ENCODE measurements at regions of chr5 and their contacts with region 1.

Region 1: GRCh38 chr5:88732181-88732633 is 150.8 kb downstream of the MEF2C start:
- DNase-seq: no peak
- H3K4me3 ChIP-seq: no peak overlapping the region
- H3K27ac ChIP-seq: peak overlapping the region; percentile 2 to 60 (median 44)
- H3K4me1 ChIP-seq: peaks cover 0 to 4% (median 0%) of the 10 kb centered on the region in 3 donors
- H3K27me3 ChIP-seq: no peaks in the 10 kb centered on the region
- CTCF ChIP-seq: no peak
- POLR2A ChIP-seq: no peak

Region 2: GRCh38 chr5:89036704-89037489 is 304.7 kb after region 1 on chr5:
- intact Hi-C with region 1: no loop called
- DNase-seq: no peak
- H3K4me3 ChIP-seq: no peak overlapping the region
- H3K27ac ChIP-seq: no peak overlapping the region
- H3K4me1 ChIP-seq: no peaks in the 10 kb centered on the region
- H3K27me3 ChIP-seq: no peaks in the 10 kb centered on the region
- CTCF ChIP-seq: no peak
- POLR2A ChIP-seq: no peak

Region 3: GRCh38 chr5:90264689-90265544 is 1532.7 kb after region 1 on chr5:
- intact Hi-C with region 1: loop called (anchors 5 kb)
- DNase-seq: no peak
- H3K4me3 ChIP-seq: no peak overlapping the region
- H3K27ac ChIP-seq: no peak overlapping the region
- H3K4me1 ChIP-seq: peaks cover 0 to 6% (median 0%) of the 10 kb centered on the region in 3 donors
- H3K27me3 ChIP-seq: no peaks in the 10 kb centered on the region
- CTCF ChIP-seq: peak; percentile 70 to 88 (median 79)
- POLR2A ChIP-seq: no peak